AG04449 (cell line): ENCODE measurements at regions of chr3 and their contacts with region 1.

Region 1: GRCh38 chr3:190321789-190322603 is at the start of gene CLDN1:
- DNase-seq: no peak
- H3K4me3 ChIP-seq: peak within 1 kb of the TSS; percentile 64
- CTCF ChIP-seq: peak; percentile 95

Region 2: DNA sequence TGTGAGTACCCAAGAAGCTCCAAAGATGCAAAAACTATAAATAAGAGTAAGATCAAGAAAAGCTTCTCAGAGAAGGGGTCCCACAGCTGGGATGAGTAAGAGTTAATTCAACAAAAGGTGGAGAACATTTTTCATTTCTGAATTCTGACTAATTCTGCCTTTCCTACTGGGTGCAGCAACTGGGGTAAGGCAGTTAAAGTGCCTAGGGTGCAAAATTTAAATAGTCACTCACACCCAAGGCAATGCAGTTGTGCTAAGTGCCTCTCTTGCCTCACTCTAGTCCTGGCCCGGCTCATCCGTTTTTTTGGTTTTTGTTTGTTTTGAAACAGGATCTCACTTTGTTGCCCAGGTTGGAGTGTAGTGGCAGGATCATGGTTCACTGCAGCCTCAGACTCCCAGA is 450.6 kb before region 1 on chr3:
- CTCF ChIA-PET with region 1: no interaction called
- POLR2A ChIA-PET with region 1: no interaction called
- DNase-seq: no peak
- H3K4me3 ChIP-seq: no peak overlapping the region
- CTCF ChIP-seq: no peak

Region 3: GRCh38 chr3:190224863-190225692 is 96.9 kb before region 1 on chr3:
- CTCF ChIA-PET with region 1: interaction called, 201 read pairs
- POLR2A ChIA-PET with region 1: no interaction called
- DNase-seq: no peak
- H3K4me3 ChIP-seq: no peak overlapping the region
- CTCF ChIP-seq: peak; percentile 12

Region 4: DNA sequence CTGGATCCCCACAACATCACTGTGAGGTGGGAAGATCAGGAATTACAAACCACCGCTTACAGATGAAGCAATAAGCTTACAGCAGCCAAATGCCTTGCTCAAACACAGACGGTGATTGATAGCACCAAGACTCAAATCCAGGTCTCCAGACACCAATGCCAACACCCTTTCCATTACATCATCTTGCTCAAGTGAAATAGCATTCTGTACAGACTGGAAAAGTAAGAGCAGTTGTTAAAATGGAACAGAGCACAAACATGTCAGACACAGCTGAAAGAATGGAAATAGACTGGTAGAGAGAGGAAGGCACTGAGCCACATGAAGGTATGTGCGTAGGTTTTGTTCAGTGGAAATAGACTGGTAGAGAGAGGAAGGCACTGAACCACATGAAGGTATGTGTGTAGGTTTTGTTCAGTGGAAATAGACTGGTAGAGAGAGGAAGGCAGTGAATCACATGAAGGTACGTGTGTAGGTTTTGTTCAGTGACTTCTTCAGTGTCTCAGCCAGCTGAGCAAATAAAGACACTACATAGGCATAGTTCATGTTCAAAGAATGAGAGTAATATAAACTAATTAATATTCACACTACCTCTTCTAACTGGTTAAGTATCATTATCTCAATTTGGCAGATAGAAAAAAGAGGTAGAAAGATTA is 15.4 kb before region 1 on chr3:
- CTCF ChIA-PET with region 1: interaction called, 87 read pairs
- POLR2A ChIA-PET with region 1: no interaction called
- DNase-seq: no peak
- H3K4me3 ChIP-seq: no peak overlapping the region
- CTCF ChIP-seq: no peak

Region 5: GRCh38 chr3:190378240-190378891 is 56.4 kb after region 1 on chr3:
- CTCF ChIA-PET with region 1: interaction called, 21 read pairs
- POLR2A ChIA-PET with region 1: no interaction called
- DNase-seq: peak; percentile 51
- H3K4me3 ChIP-seq: no peak overlapping the region
- CTCF ChIP-seq: no peak

Region 6: DNA sequence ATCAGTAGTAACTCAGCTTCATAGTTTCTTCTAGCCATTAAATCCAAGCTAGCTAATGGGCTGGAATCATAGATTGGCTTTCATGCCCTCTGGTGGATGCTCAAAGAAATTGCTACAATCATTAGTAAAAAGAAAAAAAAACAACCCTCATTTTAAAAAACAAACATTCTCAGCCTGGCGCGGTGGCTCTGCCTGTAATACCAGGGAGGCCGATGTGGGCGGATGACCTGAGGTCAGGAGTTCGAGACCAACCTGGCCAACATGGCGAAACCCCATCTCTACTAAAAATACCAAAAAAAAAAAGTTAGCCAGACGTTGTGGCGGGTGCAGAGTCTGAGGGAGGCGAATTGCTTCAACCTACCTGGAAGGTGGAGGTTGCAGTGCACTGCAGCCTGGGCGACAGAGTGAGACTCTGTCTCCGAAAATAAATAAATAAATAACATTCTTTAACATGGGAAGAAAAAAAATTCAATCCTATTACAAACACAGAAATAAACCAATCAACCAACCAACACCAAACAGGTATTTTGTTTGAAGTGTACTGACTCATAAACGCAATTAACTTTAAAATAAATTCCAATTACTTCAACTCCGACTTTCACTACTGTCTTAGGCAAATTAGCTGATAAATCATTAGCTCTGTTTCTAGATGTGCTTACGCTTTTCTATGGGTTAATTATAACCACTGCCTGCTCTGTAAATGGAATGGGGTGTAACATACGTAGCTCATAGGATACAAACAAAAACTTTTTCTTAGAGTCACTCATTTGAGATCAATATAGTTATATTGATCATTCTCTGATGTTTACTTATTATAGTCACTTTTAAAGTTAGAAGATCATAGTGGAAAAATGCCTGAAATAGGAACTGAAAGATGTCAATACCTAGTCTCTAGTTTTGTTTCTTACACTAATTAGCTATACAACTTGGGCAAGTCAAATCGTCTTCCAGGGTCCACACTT is 102.8 kb after region 1 on chr3:
- CTCF ChIA-PET with region 1: interaction called, 48 read pairs
- POLR2A ChIA-PET with region 1: no interaction called
- DNase-seq: no peak
- H3K4me3 ChIP-seq: no peak overlapping the region
- CTCF ChIP-seq: peak; percentile 54